Prostate gland (tissue), 2 donors: ENCODE measurements at regions of chr6 and their contacts with region 1.

Region 1: GRCh38 chr6:53926525-53926924 is 131.7 kb downstream of the LRRC1 start:
- DNase-seq: no peak
- H3K4me3 ChIP-seq: no peak overlapping the region
- H3K27ac ChIP-seq: no peak overlapping the region
- H3K4me1 ChIP-seq: no peaks in the 10 kb centered on the region
- H3K27me3 ChIP-seq: no peaks in the 10 kb centered on the region
- CTCF ChIP-seq: no peak
- POLR2A ChIP-seq: no peak

Region 2: GRCh38 chr6:53725791-53726431 is 200.6 kb before region 1 on chr6:
- intact Hi-C with region 1: no loop called
- DNase-seq: peak; percentile 71
- H3K4me3 ChIP-seq: no peak overlapping the region
- H3K27ac ChIP-seq: no peak overlapping the region
- H3K4me1 ChIP-seq: no peaks in the 10 kb centered on the region
- H3K27me3 ChIP-seq: no peaks in the 10 kb centered on the region
- CTCF ChIP-seq: peak; percentile 86 to 90 (median 89)
- POLR2A ChIP-seq: no peak

Region 3: DNA sequence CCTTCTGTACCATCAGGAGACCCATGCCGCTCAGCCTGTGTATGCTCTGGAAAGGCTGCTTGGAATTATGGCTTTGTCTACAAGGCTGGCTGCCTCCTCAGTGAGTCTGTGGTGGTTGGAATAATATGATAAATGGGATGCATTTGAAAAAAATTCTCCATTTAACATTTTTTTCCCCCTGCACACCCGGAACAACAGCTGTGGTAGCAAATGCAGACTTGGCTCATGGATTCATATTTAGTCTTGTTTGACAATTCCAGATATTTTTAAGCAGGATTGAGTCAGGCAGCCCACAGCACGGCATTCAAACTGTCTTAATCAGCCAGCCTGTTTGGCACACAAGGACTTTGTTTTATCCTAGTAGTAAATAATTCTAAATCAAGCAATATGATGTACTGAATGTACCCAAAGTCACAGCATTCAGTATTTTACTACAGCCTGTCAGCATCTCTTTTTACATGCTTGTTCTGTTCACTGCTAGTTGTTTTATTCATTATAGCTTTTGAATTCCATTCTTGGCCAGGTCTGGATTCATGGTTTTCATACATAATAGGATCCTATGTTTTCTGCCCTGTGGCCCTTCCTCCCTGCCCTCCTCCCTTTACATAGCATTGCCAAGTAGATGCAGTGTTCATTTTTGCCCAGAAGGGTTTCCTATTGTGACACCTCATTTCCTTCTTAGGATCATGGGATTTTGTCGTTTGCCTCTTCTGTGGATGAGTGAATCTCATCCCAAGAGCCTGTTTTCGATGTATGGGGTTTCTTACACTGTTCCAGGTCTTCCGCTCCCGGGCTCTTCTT is 63.7 kb before region 1 on chr6:
- intact Hi-C with region 1: loop called (anchors 10 kb)
- DNase-seq: no peak
- H3K4me3 ChIP-seq: no peak overlapping the region
- H3K27ac ChIP-seq: no peak overlapping the region
- H3K4me1 ChIP-seq: no peaks in the 10 kb centered on the region
- H3K27me3 ChIP-seq: no peaks in the 10 kb centered on the region
- CTCF ChIP-seq: no peak
- POLR2A ChIP-seq: no peak

Region 4: GRCh38 chr6:53906842-53907241 is 19.7 kb before region 1 on chr6:
- intact Hi-C with region 1: no loop called
- DNase-seq: no peak
- H3K4me3 ChIP-seq: no peak overlapping the region
- H3K27ac ChIP-seq: no peak overlapping the region
- H3K4me1 ChIP-seq: no peaks in the 10 kb centered on the region
- H3K27me3 ChIP-seq: no peaks in the 10 kb centered on the region
- CTCF ChIP-seq: no peak
- POLR2A ChIP-seq: no peak

Region 5: GRCh38 chr6:54238396-54238795 is 311.9 kb after region 1 on chr6:
- intact Hi-C with region 1: no loop called
- DNase-seq: peak; percentile 6
- H3K4me3 ChIP-seq: no peak overlapping the region
- H3K27ac ChIP-seq: no peak overlapping the region
- H3K4me1 ChIP-seq: no peaks in the 10 kb centered on the region
- H3K27me3 ChIP-seq: no peaks in the 10 kb centered on the region
- CTCF ChIP-seq: no peak
- POLR2A ChIP-seq: no peak